RWPE1 (cell line): ENCODE measurements at regions of chr12 and their contacts with region 1.

Region 1: DNA sequence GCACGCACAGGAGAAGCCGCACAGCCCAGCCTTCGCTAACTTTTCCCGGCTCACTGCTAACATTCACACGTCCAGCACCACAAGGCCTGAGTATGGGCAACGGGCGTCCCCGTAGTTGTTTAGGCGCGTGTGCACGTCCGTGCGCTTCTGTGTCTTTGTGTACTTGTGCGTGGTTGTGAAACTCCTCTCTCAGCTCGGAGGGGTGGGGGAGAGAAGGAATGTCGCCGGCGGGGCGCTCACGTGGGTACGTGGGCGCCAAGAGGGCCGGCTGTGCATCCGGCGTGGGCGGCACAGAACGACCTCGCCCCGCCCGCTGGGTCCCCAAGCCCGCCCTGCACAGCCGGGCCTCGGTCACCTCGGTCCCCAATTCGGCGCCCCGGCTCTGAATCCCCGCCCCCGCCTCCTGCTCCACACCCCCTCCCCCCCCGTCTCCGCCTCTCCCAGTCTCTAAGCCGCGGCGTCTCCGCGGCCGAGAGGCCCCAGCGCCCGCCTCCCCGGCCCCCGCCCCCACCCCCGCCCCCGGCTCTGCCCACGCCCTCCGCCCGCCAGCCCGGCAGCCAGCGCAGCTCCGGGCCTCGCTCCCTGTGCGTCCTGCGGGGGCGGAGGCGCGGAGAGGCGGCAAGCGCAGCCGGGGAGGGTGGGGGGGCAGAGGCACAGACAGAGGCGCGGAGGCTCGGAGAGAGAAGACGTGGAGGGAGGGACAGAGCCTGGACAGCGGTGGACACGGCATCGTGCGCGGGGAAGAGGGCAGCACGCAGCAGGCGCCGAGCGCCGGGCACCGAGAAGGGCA is at the start of gene NAB2:
- DNase-seq: peak; percentile 79
- H3K27ac ChIP-seq: peak within 1 kb of the TSS; percentile 100
- CTCF ChIP-seq: no peak

Region 2: DNA sequence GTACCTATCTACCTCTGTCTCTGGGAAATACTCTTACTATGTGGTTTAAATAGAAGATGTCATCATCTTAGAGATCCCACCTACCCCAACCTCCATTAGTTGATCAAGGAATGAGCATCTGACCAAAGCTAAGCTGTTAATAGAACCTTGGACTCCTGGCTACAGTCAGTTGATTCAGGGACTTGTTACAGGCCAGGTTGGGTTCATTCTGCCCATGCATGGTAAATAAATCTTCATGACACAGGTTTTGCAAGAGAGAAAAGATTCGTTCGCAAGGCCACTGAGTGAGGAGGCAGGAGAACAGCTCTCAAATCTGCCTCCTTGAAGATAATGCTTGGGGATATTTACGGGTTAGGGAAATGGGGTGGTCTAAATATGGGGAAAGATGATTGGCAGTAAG is 173.9 kb before region 1 on chr12:
- CTCF ChIA-PET with region 1: no interaction called
- POLR2A ChIA-PET with region 1: no interaction called
- DNase-seq: no peak
- H3K27ac ChIP-seq: no peak overlapping the region
- CTCF ChIP-seq: no peak

Region 3: DNA sequence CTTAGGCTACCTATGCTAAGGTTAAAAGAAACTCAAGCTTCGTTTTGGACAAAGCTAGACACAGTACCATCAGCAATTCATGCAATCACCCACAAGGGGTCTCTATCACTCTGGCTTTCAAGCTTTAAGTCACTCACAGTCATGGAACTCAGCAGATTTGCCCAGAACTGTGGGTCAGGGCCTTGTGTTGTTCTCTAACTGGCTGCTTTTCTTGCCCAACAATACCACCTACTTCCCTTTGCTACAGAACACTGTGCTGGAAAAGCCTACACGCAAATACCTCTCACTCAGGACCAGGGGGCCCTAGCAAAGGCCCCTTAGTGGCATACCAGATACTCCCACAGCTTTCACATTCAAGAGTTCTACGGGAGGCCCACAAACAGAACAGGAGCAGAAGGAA is 19.1 kb before region 1 on chr12:
- CTCF ChIA-PET with region 1: interaction called, 10 read pairs
- POLR2A ChIA-PET with region 1: interaction called, 3 read pairs
- DNase-seq: peak; percentile 52
- H3K27ac ChIP-seq: no peak overlapping the region
- CTCF ChIP-seq: peak; percentile 79